Esophagus muscularis mucosa (tissue), 4 donors: ENCODE measurements at regions of chr2 and their contacts with region 1.

Region 1: DNA sequence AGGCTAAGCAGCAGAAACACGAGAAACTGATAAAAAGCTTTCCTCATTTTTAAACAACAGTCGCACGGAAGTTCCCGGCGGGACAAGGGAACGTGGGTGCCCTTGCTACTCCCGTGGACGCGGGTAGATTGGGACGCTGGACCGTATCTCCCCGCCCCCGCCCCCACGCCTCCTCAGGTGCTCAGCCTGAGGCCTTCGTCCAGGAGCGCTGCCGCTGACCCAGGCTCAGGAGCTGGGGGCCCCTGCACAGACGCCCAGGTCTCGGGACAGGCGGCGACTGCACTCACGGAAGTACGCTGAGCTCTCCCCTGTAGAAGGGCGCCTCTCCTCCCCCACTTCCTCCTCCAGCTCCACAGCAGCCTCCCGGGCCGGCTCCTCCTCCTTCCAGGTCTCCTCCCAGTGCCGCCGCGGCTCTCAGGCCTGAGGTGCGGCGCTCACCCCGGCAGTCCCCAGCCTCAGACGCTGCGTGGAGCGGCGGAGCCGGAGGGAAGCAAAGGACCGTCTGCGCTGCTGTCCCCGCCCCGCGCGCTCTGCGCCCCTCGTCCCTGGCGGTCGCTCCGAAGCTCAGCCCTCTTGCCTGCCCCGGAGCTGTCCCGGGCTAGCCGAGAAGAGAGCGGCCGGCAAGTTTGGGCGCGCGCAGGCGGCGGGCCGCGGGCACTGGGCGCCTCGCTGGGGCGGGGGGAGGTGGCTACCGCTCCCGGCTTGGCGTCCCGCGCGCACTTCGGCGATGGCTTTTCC is at the start of gene ITGAV:
- DNase-seq: peak; percentile 98
- H3K4me3 ChIP-seq: peak within 1 kb of the TSS; percentile 59 to 91 (median 78)
- H3K27ac ChIP-seq: peak within 1 kb of the TSS; percentile 87 to 96 (median 95)
- H3K4me1 ChIP-seq: peaks cover under 1 to 45% (median 44%) of the 10 kb centered on the region in 4 donors
- H3K27me3 ChIP-seq: no peaks in the 10 kb centered on the region
- CTCF ChIP-seq: peak in 1 of 3 experiments; percentile 2
- EP300 ChIP-seq: no peak
- POLR2A ChIP-seq: peak; percentile 78
- total RNA-seq, gene ITGAV: 98.4 to 117 (median 105) TPM

Region 2: GRCh38 chr2:186493564-186494085 is 96.2 kb before region 1 on chr2:
- intact Hi-C with region 1: loop called (anchors 5 kb)
- DNase-seq: no peak
- H3K4me3 ChIP-seq: no peak overlapping the region
- H3K27ac ChIP-seq: no peak overlapping the region
- H3K4me1 ChIP-seq: peaks cover 33 to 60% (median 53%) of the 10 kb centered on the region in 4 donors
- H3K27me3 ChIP-seq: no peaks in the 10 kb centered on the region
- CTCF ChIP-seq: no peak
- EP300 ChIP-seq: no peak
- POLR2A ChIP-seq: no peak

Region 3: GRCh38 chr2:186903216-186903615 is 313.4 kb after region 1 on chr2:
- intact Hi-C with region 1: no loop called
- DNase-seq: no peak
- H3K4me3 ChIP-seq: no peak overlapping the region
- H3K27ac ChIP-seq: no peak overlapping the region
- H3K4me1 ChIP-seq: no peaks in the 10 kb centered on the region
- H3K27me3 ChIP-seq: no peaks in the 10 kb centered on the region
- CTCF ChIP-seq: peak; percentile 19 to 47 (median 39)
- EP300 ChIP-seq: no peak
- POLR2A ChIP-seq: no peak

Region 4: GRCh38 chr2:186968277-186968676 is 378.5 kb after region 1 on chr2:
- intact Hi-C with region 1: no loop called
- DNase-seq: no peak
- H3K4me3 ChIP-seq: no peak overlapping the region
- H3K27ac ChIP-seq: no peak overlapping the region
- H3K4me1 ChIP-seq: no peaks in the 10 kb centered on the region
- H3K27me3 ChIP-seq: no peaks in the 10 kb centered on the region
- CTCF ChIP-seq: no peak
- EP300 ChIP-seq: no peak
- POLR2A ChIP-seq: no peak